ENCODE measurements at regions of chr20 and their contacts with region 1.

Region 1: DNA sequence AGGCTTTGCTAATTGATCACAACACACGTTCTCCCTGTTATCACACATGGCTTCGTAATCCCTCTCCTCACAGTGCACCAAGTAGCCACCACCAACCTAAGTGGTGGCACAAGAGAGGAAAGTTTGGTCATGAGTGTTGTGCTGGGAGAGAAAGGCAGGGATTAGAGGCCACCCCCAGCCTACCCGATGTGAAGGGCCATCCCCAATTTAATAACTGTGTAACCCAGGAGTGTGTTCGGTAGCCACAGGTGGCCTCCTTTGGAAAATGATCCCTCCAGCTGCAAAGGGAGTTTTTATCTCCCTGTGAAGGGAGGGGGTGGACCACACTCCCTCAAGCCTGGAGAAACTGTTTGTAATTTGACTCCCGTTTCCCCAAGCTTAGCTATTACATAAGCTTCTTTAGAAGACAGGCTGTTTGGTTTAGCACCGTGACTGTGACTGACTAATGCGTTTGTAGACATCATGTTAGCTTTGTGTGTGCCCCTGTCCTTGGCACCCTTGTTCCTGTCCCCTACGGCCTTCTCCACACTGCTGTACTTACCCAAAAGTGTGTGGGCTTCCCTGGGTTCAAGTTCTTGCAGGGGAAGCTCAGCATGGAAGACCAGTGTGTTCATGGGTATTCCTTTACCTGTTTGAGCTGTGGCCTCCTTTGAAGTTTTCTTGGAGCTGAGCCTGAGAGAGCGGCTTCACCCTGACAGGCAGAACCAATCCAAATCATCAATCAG is 20.6 kb downstream of the PPP1R16B start:
- DNase-seq: peak; percentile 86
- H3K4me3 ChIP-seq: no peak overlapping the region
- H3K27ac ChIP-seq: peak overlapping the region; percentile 99
- H3K4me1 ChIP-seq: peaks cover 61% of the 10 kb centered on the region
- H3K27me3 ChIP-seq: no peaks in the 10 kb centered on the region
- CTCF ChIP-seq: no peak
- POLR2A ChIP-seq: no peak

Region 2: GRCh38 chr20:38757145-38757775 is 68.8 kb before region 1 on chr20:
- CTCF ChIA-PET with region 1: no interaction called
- POLR2A ChIA-PET with region 1: no interaction called
- dilution Hi-C with region 1: no loop called
- intact Hi-C with region 1: loop called (anchors 1 kb)
- DNase-seq: peak; percentile 73
- H3K4me3 ChIP-seq: no peak overlapping the region
- H3K27ac ChIP-seq: peak overlapping the region; percentile 87
- H3K4me1 ChIP-seq: peaks cover 11% of the 10 kb centered on the region
- H3K27me3 ChIP-seq: no peaks in the 10 kb centered on the region
- CTCF ChIP-seq: no peak
- POLR2A ChIP-seq: no peak

Region 3: DNA sequence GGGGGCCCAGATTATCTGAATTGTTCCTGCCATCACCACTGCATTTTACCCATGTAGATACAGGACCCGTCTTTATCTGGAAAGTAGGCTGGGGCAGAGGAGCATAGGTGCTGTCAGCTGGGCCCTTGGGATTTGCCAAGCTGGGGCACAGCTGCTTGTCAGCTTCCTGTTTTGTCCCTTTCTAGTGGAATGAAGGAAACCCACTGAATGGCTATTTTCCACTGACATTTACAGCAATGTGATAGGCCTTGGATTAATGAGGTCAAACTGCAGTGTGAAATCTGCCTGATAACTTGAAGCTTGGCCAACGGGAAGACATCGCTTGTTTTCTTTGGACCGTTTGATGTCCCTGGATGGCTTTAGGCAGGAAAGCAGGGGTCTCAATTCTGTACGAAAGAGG is 13.9 kb before region 1 on chr20:
- CTCF ChIA-PET with region 1: interaction called, 14 read pairs
- POLR2A ChIA-PET with region 1: interaction called, 12 read pairs
- dilution Hi-C with region 1: no loop called
- intact Hi-C with region 1: loop called (anchors 1 kb)
- DNase-seq: peak; percentile 96
- H3K4me3 ChIP-seq: no peak overlapping the region
- H3K27ac ChIP-seq: peak overlapping the region; percentile 47
- H3K4me1 ChIP-seq: peaks cover 43% of the 10 kb centered on the region
- H3K27me3 ChIP-seq: no peaks in the 10 kb centered on the region
- CTCF ChIP-seq: no peak
- POLR2A ChIP-seq: peak; percentile 21

Region 4: GRCh38 chr20:38875175-38875993 is 49.3 kb after region 1 on chr20:
- CTCF ChIA-PET with region 1: interaction called, 11 read pairs
- POLR2A ChIA-PET with region 1: interaction called, 4 read pairs
- dilution Hi-C with region 1: no loop called
- intact Hi-C with region 1: loop called (anchors 1 kb)
- DNase-seq: peak; percentile 92
- H3K4me3 ChIP-seq: no peak overlapping the region
- H3K27ac ChIP-seq: peak overlapping the region; percentile 54
- H3K4me1 ChIP-seq: peaks cover 36% of the 10 kb centered on the region
- H3K27me3 ChIP-seq: no peaks in the 10 kb centered on the region
- CTCF ChIP-seq: no peak
- POLR2A ChIP-seq: no peak

Region 5: DNA sequence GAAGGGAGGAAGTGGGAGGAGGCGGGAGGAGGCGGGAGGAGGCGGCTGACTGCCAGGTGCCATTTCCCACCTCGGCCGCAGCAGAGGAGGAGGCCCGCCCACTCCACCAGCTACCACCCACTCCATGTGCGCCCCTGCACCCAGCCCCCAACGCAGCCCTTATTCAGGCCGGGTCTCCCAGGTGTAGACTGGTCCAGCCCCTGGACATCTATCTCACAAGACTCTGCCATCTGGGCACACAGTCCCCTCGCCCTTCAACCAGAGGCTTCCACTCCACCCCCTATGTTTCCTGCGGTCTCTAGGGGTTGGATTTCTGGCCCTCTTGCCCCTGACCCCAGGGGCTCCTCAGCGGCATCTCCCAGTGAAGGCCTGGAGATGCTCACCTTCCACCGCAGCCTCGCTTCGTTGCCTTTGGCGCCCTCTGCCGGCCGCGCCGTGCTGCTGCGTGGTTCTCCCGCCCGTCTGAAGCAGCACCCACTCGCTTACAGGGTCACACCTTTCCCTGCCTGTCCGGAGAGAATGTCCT is 67.6 kb after region 1 on chr20:
- CTCF ChIA-PET with region 1: interaction called, 5 read pairs
- POLR2A ChIA-PET with region 1: no interaction called
- dilution Hi-C with region 1: no loop called
- intact Hi-C with region 1: loop called (anchors 2 kb)
- DNase-seq: peak; percentile 65
- H3K4me3 ChIP-seq: no peak overlapping the region
- H3K27ac ChIP-seq: no peak overlapping the region
- H3K4me1 ChIP-seq: peaks cover 5% of the 10 kb centered on the region
- H3K27me3 ChIP-seq: no peaks in the 10 kb centered on the region
- CTCF ChIP-seq: peak; percentile 86 to 99
- POLR2A ChIP-seq: no peak

Measured in endothelial cell of umbilical vein (primary cell).